ENCODE measurements at regions of chr16 and their contacts with region 1.

Region 1: GRCh38 chr16:67846320-67847063 is at the start of gene NUTF2:
- DNase-seq: peak; percentile 93 to 97 (median 95)
- ATAC-seq: peak; percentile 82
- H3K4me3 ChIP-seq: peak within 1 kb of the TSS; percentile 99
- H3K27ac ChIP-seq: peak within 1 kb of the TSS; percentile 77
- H3K4me1 ChIP-seq: peaks cover 30 to 53% of the 10 kb centered on the region in 2 experiments
- H3K27me3 ChIP-seq: no peaks in the 10 kb centered on the region
- CTCF ChIP-seq: 0 out of 6 replicates have a peak, but pooled peaks of 1 of the 3 experiments have one; percentile 1
- EP300 ChIP-seq: peak; percentile 51
- POLR2A ChIP-seq: peak; percentile 72
- RAD21 ChIP-seq: 0 out of 4 replicates have a peak, but pooled peaks of 1 of the 2 experiments have one; percentile 10
- polyA plus RNA-seq, gene NUTF2: 244 to 246 TPM

Region 2: DNA sequence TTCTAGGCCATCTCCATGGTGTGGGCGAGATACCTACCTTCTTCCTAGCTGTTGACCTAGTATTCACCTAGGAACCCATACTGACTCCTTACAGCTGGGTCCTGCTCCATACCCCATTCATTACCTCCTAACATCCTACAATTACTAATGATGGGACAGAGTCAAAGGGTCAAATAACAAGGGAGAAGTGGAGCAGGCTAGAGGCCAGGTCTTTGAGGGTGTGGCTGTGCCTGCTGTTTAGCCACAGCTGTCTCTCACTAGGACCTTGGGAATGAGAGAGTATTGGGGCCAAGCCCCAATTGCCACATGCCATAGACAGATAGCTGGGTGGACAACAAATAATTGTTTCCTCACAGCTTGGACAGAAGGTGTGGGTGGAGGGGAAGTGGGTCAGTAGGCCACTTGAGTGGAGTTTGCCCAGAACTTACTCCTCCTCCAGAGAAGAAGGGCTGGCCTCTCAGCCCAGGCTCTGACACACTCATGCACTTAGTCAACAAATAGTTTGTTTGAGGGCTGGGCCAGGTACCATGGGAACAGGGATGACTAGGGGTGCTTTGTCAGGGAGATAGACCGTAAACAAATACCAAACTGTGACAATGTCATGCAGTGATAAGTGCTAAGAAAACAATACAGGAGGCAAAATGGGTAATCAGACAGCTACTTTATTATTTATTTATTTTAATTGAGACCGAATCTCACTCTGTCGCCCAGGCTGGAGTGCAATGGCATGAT is 11.2 kb after region 1 on chr16:
- CTCF ChIA-PET with region 1: no interaction called
- POLR2A ChIA-PET with region 1: interaction called, 10 read pairs
- in situ Hi-C with region 1: no loop called
- intact Hi-C with region 1: no loop called
- DNase-seq: peak; percentile 60 to 76 (median 71)
- ATAC-seq: peak; percentile 83
- H3K4me3 ChIP-seq: no peak overlapping the region
- H3K27ac ChIP-seq: peak overlapping the region; percentile 61; the same call in 2 of the 3 replicates
- H3K4me1 ChIP-seq: peaks cover 19 to 31% of the 10 kb centered on the region in 2 experiments
- H3K27me3 ChIP-seq: no peaks in the 10 kb centered on the region
- CTCF ChIP-seq: no peak
- EP300 ChIP-seq: 0 out of 2 replicates have a peak, but pooled peaks have one; percentile 35
- POLR2A ChIP-seq: no peak
- RAD21 ChIP-seq: no peak

Region 3: DNA sequence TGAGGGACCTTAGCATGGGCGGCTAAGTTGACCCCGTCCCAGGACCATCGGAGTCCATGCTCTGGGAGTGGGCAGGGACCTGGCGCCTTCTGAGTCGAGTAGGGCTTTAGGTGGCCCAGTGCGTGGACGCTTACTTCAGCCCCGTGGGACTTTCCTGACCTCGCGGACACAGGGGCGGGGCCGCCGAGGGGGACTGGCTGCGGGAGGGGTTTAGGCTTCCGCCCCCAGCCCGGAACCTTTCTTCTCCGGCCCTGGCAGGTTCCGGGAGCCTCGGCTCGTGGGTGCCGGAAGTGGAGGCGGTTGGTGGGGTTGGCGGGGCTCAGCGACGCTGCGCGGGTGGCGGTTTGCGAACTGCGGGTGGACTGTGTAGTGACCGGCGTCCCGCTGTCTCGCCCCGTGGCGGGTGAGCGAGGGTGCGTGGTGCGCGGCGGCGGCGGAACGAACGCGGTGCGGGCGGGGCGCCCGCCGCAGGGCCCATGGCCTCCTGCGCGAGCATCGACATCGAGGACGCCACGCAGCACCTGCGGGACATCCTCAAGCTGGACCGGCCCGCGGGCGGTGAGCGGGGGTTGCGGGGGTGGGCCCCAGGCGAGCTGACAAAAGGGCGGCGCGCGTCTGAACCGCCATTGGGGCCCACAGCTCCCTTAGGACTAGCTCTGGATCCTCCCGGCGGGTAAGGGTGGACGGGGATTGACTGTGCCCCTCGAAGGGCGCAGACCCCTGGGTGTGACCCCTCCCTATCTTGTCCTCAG is 26.5 kb after region 1 on chr16 and contains the start of gene EDC4:
- CTCF ChIA-PET with region 1: no interaction called
- POLR2A ChIA-PET with region 1: interaction called, 10 read pairs
- in situ Hi-C with region 1: no loop called
- intact Hi-C with region 1: no loop called
- DNase-seq: peak; percentile 90 to 95 (median 94)
- ATAC-seq: peak; percentile 94
- H3K4me3 ChIP-seq: peak within 1 kb of the TSS; percentile 85
- H3K27ac ChIP-seq: peak within 1 kb of the TSS; percentile 83
- H3K4me1 ChIP-seq: peaks cover 21% of the 10 kb centered on the region in 2 experiments; a peak in 4 of 5 replicates
- H3K27me3 ChIP-seq: no peaks in the 10 kb centered on the region
- CTCF ChIP-seq: no peak
- EP300 ChIP-seq: peak; percentile 66
- POLR2A ChIP-seq: peak; percentile 84
- RAD21 ChIP-seq: no peak
- polyA plus RNA-seq, gene EDC4: 1.1 to 2.7 TPM

Region 4: DNA sequence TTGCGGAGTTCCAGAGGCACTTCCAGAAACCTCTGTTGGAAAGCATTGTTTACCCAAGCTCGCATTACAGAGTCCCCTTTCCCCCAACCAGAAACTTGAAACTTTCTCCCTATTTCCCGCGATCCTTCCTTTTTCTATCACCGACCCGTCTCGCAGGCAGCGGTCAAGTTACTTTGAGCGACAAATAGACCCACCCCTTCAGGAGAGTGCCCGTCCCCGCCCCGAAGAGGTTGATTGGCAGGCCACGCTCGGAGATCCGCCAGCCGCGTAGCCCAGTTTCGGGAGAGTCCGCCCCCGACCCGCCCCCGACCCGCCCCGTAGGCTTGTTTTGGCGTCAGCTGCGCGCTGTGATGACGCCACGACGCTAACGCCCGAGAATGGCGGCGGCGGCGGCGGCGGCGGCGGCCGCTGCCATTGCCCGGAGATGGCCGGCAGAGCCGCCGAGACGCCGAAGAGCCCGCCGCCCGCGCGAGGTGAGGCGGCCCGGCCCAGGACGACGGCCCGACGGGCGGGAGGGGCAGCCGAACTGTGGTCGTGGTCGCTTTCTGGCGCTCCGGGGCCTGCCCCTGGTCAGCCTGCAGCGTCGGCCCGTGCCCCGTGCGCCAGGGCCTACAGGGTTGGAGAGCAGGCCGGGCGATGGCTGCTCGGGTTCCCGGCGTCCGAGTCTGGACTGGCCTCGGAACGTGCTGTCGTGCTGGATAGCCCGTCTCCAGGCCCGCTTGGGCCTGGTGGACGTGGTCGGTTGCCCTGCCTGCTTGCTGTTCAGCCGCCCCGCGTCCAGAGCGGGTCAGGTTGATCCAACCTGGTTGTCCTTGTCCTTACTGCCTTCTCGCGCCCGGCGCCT is 46.6 kb after region 1 on chr16 and contains the start of gene PSKH1:
- CTCF ChIA-PET with region 1: no interaction called
- POLR2A ChIA-PET with region 1: interaction called, 3 read pairs
- in situ Hi-C with region 1: no loop called
- intact Hi-C with region 1: loop called (anchors 2 kb)
- DNase-seq: peak; percentile 97 to 99 (median 97)
- ATAC-seq: peak; percentile 95
- H3K4me3 ChIP-seq: peak within 1 kb of the TSS; percentile 95
- H3K27ac ChIP-seq: peak within 1 kb of the TSS; percentile 91
- H3K4me1 ChIP-seq: peaks cover 8 to 26% of the 10 kb centered on the region in 2 experiments; a peak in 4 of 5 replicates
- H3K27me3 ChIP-seq: no peaks in the 10 kb centered on the region
- CTCF ChIP-seq: no peak
- EP300 ChIP-seq: 0 out of 2 replicates have a peak, but pooled peaks have one; percentile 1
- POLR2A ChIP-seq: peak; percentile 47
- RAD21 ChIP-seq: no peak
- polyA plus RNA-seq, gene PSKH1: 0.96 to 1.0 TPM

Measured in K562 (cell line).